ENCODE measurements at regions of chrX and their contacts with region 1.

Region 1: DNA sequence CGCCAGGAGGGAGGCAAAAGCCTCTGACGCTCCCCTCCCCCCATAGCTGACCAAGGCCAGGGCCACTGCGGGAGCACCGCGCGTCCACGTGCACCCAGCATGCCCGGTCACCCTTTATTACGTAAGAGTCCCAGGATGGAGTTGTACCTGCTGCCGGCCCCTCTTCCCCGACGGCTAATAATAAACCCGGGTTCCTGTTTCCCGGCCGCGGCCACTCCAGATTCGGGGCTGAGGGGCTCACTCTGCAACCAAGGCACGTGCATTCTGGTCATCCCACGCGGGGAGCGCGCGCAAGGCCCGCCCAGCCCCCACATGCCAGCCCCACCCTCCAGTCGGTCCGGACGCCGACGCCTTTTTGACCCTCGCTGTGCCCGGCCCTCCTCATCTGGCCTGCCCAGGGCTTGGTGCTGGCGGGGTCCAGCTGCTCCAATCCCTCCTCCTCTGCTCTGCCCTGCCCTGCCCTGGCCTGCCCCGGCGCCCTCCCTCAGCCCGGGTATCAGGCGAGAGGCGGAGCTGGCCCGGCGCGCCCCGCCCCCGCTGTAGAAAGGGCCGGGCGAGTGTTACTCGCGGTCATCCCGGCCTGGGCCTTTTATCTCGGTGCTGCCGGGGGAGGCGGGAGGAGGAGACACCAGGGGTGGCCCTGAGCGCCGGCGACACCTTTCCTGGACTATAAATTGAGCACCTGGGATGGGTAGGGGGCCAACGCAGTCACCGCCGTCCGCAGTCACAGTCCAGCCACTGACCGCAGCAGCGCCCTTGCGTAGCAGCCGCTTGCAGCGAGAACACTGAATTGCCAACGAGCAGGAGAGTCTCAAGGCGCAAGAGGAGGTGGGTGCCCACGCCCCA is 2.5 kb downstream of the MID1IP1 start:
- DNase-seq: peak in 5 of 9 donors; percentile 35 to 83 (median 41)
- ATAC-seq: peak; percentile 68
- H3K4me3 ChIP-seq: peak overlapping the region; percentile 74
- H3K4me3 Mint-ChIP-seq: peak overlapping the region; percentile 88 to 95 (median 93)
- H3K27ac ChIP-seq: peak overlapping the region; percentile 77
- H3K27ac Mint-ChIP-seq: peak overlapping the region; percentile 92 to 98 (median 95)
- H3K4me1 ChIP-seq: peaks cover 6 to 10% of the 10 kb centered on the region in 2 donors
- H3K4me1 Mint-ChIP-seq: peaks cover 0 to 33% (median 23%) of the 10 kb centered on the region in 7 donors
- H3K27me3 ChIP-seq: no peaks in the 10 kb centered on the region
- H3K27me3 Mint-ChIP-seq: no peaks in the 10 kb centered on the region

Region 2: GRCh38 chrX:38817004-38817703 is 13.3 kb after region 1 on chrX:
- CTCF ChIA-PET with region 1: interaction called, 6 read pairs
- POLR2A ChIA-PET with region 1: interaction called, 44 read pairs
- intact Hi-C with region 1: loop called (anchors 1 to 2 kb)
- DNase-seq: peak in 1 of 9 donors; percentile 16
- ATAC-seq: peak; percentile 42
- H3K4me3 ChIP-seq: no peak overlapping the region
- H3K4me3 Mint-ChIP-seq: peak overlapping the region in 3 of 10 donors; percentile 26 to 62 (median 44)
- H3K27ac ChIP-seq: peak overlapping the region; percentile 50
- H3K27ac Mint-ChIP-seq: no peak overlapping the region
- H3K4me1 ChIP-seq: peaks cover 35 to 54% of the 10 kb centered on the region in 2 donors
- H3K4me1 Mint-ChIP-seq: peaks cover 11 to 31% (median 21%) of the 10 kb centered on the region in 7 donors
- H3K27me3 ChIP-seq: no peaks in the 10 kb centered on the region
- H3K27me3 Mint-ChIP-seq: no peaks in the 10 kb centered on the region

Region 3: GRCh38 chrX:38891641-38892413 is 88.0 kb after region 1 on chrX:
- CTCF ChIA-PET with region 1: no interaction called
- POLR2A ChIA-PET with region 1: no interaction called
- intact Hi-C with region 1: loop called in 1 of 2 experiments (anchors 5 kb)
- DNase-seq: peak in 3 of 9 donors; percentile 0 to 8 (median 3)
- ATAC-seq: no peak
- H3K4me3 ChIP-seq: no peak overlapping the region
- H3K4me3 Mint-ChIP-seq: peak overlapping the region in 1 of 10 donors; percentile 11
- H3K27ac ChIP-seq: no peak overlapping the region
- H3K27ac Mint-ChIP-seq: peak overlapping the region in 2 of 9 donors; percentile 11 to 36
- H3K4me1 ChIP-seq: peaks cover 0 to 6% of the 10 kb centered on the region in 2 donors
- H3K4me1 Mint-ChIP-seq: peaks cover 0 to 11% (median 10%) of the 10 kb centered on the region in 7 donors
- H3K27me3 ChIP-seq: no peaks in the 10 kb centered on the region
- H3K27me3 Mint-ChIP-seq: no peaks in the 10 kb centered on the region

Region 4: GRCh38 chrX:38960137-38960536 is 156.3 kb after region 1 on chrX:
- CTCF ChIA-PET with region 1: no interaction called
- POLR2A ChIA-PET with region 1: no interaction called
- intact Hi-C with region 1: no loop called
- DNase-seq: no peak
- ATAC-seq: no peak
- H3K4me3 ChIP-seq: no peak overlapping the region
- H3K4me3 Mint-ChIP-seq: no peak overlapping the region
- H3K27ac ChIP-seq: no peak overlapping the region
- H3K27ac Mint-ChIP-seq: no peak overlapping the region
- H3K4me1 ChIP-seq: no peaks in the 10 kb centered on the region
- H3K4me1 Mint-ChIP-seq: no peaks in the 10 kb centered on the region
- H3K27me3 ChIP-seq: no peaks in the 10 kb centered on the region
- H3K27me3 Mint-ChIP-seq: no peaks in the 10 kb centered on the region

Region 5: GRCh38 chrX:39309018-39309635 is 505.3 kb after region 1 on chrX:
- CTCF ChIA-PET with region 1: no interaction called
- POLR2A ChIA-PET with region 1: interaction called, 4 read pairs
- intact Hi-C with region 1: loop called (anchors 5 to 10 kb)
- DNase-seq: peak in 7 of 9 donors; percentile 23 to 81 (median 43)
- ATAC-seq: peak; percentile 83
- H3K4me3 ChIP-seq: peak overlapping the region; percentile 41
- H3K4me3 Mint-ChIP-seq: peak overlapping the region; percentile 33 to 91 (median 76)
- H3K27ac ChIP-seq: peak overlapping the region; percentile 84
- H3K27ac Mint-ChIP-seq: peak overlapping the region; percentile 95 to 100 (median 99)
- H3K4me1 ChIP-seq: peaks cover 18 to 42% of the 10 kb centered on the region in 2 donors
- H3K4me1 Mint-ChIP-seq: peaks cover 28 to 81% (median 74%) of the 10 kb centered on the region in 7 donors
- H3K27me3 ChIP-seq: no peaks in the 10 kb centered on the region
- H3K27me3 Mint-ChIP-seq: no peaks in the 10 kb centered on the region

Region 6: DNA sequence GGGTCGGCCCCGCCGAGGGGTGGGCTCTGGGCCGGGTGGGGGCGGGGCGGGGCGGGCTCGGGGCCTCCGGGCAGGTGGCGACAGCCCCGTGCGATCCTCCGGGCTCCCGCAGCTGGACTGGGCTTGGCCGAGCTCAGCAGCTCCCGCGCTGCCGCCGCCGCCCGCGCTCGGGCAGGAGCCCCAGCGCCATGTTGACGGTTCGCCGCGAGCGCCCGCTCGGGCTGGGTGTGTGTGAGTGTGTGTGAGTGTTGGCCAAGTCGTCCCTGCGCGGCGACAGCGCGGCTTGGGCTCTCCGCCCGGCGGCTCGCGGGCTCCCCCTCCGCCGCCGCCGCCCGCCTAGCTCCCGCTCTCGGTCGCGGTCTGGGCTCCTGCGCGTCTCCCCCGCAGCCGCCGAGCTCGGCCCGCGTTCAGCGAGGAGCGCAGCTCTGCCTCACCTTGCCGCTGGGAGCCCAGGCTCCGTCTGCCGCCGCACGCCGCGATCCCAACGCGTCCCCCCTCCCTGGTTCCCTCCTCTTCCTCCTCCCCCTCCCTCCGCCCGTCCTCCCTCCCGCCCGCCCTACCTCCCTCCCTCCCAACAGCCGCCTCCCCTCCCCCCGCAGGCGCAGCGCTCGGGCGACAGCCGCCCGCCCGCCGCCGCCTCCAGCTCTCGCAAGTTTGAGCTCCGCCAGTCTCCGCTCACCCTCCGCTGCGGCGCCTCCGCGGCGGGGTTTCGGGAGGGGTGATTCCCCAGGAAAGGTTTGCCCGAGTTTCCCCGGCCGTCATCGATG is 1293.9 kb after region 1 on chrX and contains the start of gene BCOR:
- CTCF ChIA-PET with region 1: no interaction called
- POLR2A ChIA-PET with region 1: interaction called, 4 read pairs
- intact Hi-C with region 1: loop called (anchors 5 kb)
- DNase-seq: peak; percentile 54 to 78 (median 72)
- ATAC-seq: peak; percentile 58
- H3K4me3 ChIP-seq: peak within 1 kb of the TSS; percentile 74
- H3K4me3 Mint-ChIP-seq: peak within 1 kb of the TSS; percentile 88 to 98 (median 92)
- H3K27ac ChIP-seq: peak within 1 kb of the TSS; percentile 80
- H3K27ac Mint-ChIP-seq: peak within 1 kb of the TSS; percentile 82 to 93 (median 89)
- H3K4me1 ChIP-seq: peaks cover 5 to 12% of the 10 kb centered on the region in 2 donors
- H3K4me1 Mint-ChIP-seq: peaks cover 12 to 34% (median 25%) of the 10 kb centered on the region in 7 donors
- H3K27me3 ChIP-seq: no peaks in the 10 kb centered on the region
- H3K27me3 Mint-ChIP-seq: no peaks in the 10 kb centered on the region
- total RNA-seq, gene BCOR: 23.3 to 55.2 (median 43.3) TPM

Region 7: DNA sequence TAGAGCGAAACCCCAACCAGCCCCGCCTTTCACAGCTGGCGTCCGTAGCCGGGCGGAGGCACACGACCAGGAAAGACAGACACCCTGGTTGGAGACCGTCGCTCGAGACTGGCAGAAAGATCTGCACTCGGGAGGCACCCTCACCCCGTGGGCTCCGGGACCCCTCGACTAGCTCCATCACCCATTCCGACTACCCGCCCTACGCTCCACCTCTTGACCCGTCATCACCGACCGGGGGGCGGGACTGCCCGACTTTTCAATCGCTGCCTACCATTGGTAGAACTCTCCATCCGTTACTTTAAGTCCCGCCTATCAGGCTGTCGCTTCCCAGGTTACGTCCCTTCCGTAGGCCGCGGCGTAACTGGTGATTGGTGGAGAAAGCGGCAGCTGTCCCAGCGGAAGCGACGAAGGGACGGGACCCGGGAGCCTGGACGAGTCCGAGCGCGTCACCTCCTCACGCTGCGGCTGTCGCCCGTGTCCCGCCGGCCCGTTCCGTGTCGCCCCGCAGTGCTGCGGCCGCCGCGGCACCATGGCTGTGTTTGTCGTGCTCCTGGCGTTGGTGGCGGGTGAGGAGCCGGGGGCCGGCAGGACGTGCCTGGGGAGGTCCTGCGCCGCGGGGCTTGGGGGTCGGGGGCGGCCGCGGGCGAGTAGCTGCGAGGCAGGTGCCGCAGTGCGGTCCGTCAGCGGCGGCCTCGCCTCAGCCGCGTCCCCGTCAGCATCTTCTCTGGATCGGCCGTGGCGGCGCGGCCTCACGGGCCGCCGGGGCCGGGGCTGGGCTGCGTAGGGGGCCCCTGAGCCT is 1776.9 kb after region 1 on chrX and contains the start of gene ATP6AP2:
- CTCF ChIA-PET with region 1: no interaction called
- POLR2A ChIA-PET with region 1: no interaction called
- intact Hi-C with region 1: loop called in 1 of 2 experiments (anchors 10 kb)
- DNase-seq: peak; percentile 60 to 91 (median 88)
- ATAC-seq: peak; percentile 96
- H3K4me3 ChIP-seq: peak within 1 kb of the TSS; percentile 81
- H3K4me3 Mint-ChIP-seq: peak within 1 kb of the TSS; percentile 92 to 98 (median 94)
- H3K27ac ChIP-seq: peak within 1 kb of the TSS; percentile 90
- H3K27ac Mint-ChIP-seq: peak within 1 kb of the TSS; percentile 87 to 96 (median 95)
- H3K4me1 ChIP-seq: peaks cover 13 to 16% of the 10 kb centered on the region in 2 donors
- H3K4me1 Mint-ChIP-seq: peaks cover 21 to 38% (median 34%) of the 10 kb centered on the region in 7 donors
- H3K27me3 ChIP-seq: no peaks in the 10 kb centered on the region
- H3K27me3 Mint-ChIP-seq: no peaks in the 10 kb centered on the region
- total RNA-seq, gene ATP6AP2: 72.0 to 98.6 (median 82.5) TPM